ENCODE measurements at regions of chr7 and their contacts with region 1.

Region 1: GRCh38 chr7:98841179-98841997 is 28.4 kb downstream of the TMEM130 start:
- DNase-seq: peak; percentile 73 to 81 (median 79)
- ATAC-seq: peak; percentile 90
- H3K4me3 ChIP-seq: no peak overlapping the region
- H3K27ac ChIP-seq: peak overlapping the region; percentile 54 to 69 (median 60)
- H3K4me1 ChIP-seq: peaks cover 16% of the 10 kb centered on the region
- H3K27me3 ChIP-seq: no peaks in the 10 kb centered on the region
- CTCF ChIP-seq: peak; percentile 89 to 97 (median 96)
- POLR2A ChIP-seq: no peak

Region 2: GRCh38 chr7:98434095-98434494 is 407.3 kb before region 1 on chr7:
- intact Hi-C with region 1: loop called (anchors 5 kb)
- DNase-seq: no peak
- ATAC-seq: no peak
- H3K4me3 ChIP-seq: no peak overlapping the region
- H3K27ac ChIP-seq: no peak overlapping the region
- H3K4me1 ChIP-seq: no peaks in the 10 kb centered on the region
- H3K27me3 ChIP-seq: no peaks in the 10 kb centered on the region
- CTCF ChIP-seq: no peak
- POLR2A ChIP-seq: no peak

Region 3: GRCh38 chr7:98745722-98746318 is 95.6 kb before region 1 on chr7:
- intact Hi-C with region 1: loop called (anchors 10 kb)
- DNase-seq: peak; percentile 79 to 87 (median 85)
- ATAC-seq: peak; percentile 53
- H3K4me3 ChIP-seq: no peak overlapping the region
- H3K27ac ChIP-seq: no peak overlapping the region
- H3K4me1 ChIP-seq: no peaks in the 10 kb centered on the region
- H3K27me3 ChIP-seq: no peaks in the 10 kb centered on the region
- CTCF ChIP-seq: peak; percentile 77 to 84 (median 79)
- POLR2A ChIP-seq: no peak